Activated CD4-positive, alpha-beta memory T cell treated with anti-CD3 and anti-CD28 coated beads, Interleukin-2, amount 10 ng/mL, durations not matched to agents 7 days and 5 days (primary cell): ENCODE measurements at regions of chr1 and their contacts with region 1.

Region 1: GRCh38 chr1:151024540-151025146 is 11.7 kb upstream of the BNIPL start:
- DNase-seq: peak; percentile 87
- H3K4me3 Mint-ChIP-seq: peak overlapping the region; percentile 18
- H3K27ac Mint-ChIP-seq: peak overlapping the region; percentile 62
- H3K4me1 Mint-ChIP-seq: peaks cover 6% of the 10 kb centered on the region
- H3K27me3 Mint-ChIP-seq: no peaks in the 10 kb centered on the region

Region 2: GRCh38 chr1:150484861-150485260 is 539.8 kb before region 1 on chr1:
- CTCF ChIA-PET with region 1: no interaction called
- POLR2A ChIA-PET with region 1: no interaction called
- DNase-seq: no peak
- H3K4me3 Mint-ChIP-seq: no peak overlapping the region
- H3K27ac Mint-ChIP-seq: no peak overlapping the region
- H3K4me1 Mint-ChIP-seq: peaks cover 23% of the 10 kb centered on the region
- H3K27me3 Mint-ChIP-seq: peaks cover 1% of the 10 kb centered on the region

Region 3: GRCh38 chr1:151047925-151048645 is 23.4 kb after region 1 on chr1:
- CTCF ChIA-PET with region 1: interaction called, 22 read pairs
- POLR2A ChIA-PET with region 1: interaction called, 4 read pairs
- DNase-seq: peak; percentile 65
- H3K4me3 Mint-ChIP-seq: peak overlapping the region; percentile 82
- H3K27ac Mint-ChIP-seq: peak overlapping the region; percentile 79
- H3K4me1 Mint-ChIP-seq: peaks cover 57% of the 10 kb centered on the region
- H3K27me3 Mint-ChIP-seq: no peaks in the 10 kb centered on the region

Region 4: GRCh38 chr1:151059078-151059907 is 34.6 kb after region 1 on chr1 and contains the start of gene CDC42SE1:
- CTCF ChIA-PET with region 1: interaction called, 11 read pairs
- POLR2A ChIA-PET with region 1: interaction called, 15 read pairs
- DNase-seq: peak; percentile 87
- H3K4me3 Mint-ChIP-seq: peak within 1 kb of the TSS; percentile 97
- H3K27ac Mint-ChIP-seq: peak within 1 kb of the TSS; percentile 97
- H3K4me1 Mint-ChIP-seq: peaks cover 51% of the 10 kb centered on the region
- H3K27me3 Mint-ChIP-seq: no peaks in the 10 kb centered on the region
- total RNA-seq, gene CDC42SE1: 345 to 347 TPM

Region 5: GRCh38 chr1:151070474-151071276 is 46.0 kb after region 1 on chr1 and contains the start of gene GABPB2:
- CTCF ChIA-PET with region 1: interaction called, 13 read pairs
- POLR2A ChIA-PET with region 1: interaction called, 3 read pairs
- DNase-seq: peak; percentile 88
- H3K4me3 Mint-ChIP-seq: peak within 1 kb of the TSS; percentile 98
- H3K27ac Mint-ChIP-seq: peak within 1 kb of the TSS; percentile 99
- H3K4me1 Mint-ChIP-seq: peaks cover 31% of the 10 kb centered on the region
- H3K27me3 Mint-ChIP-seq: no peaks in the 10 kb centered on the region
- total RNA-seq, gene GABPB2: 24.5 to 25.9 TPM

Region 6: GRCh38 chr1:151221616-151222015 is 197.0 kb after region 1 on chr1:
- CTCF ChIA-PET with region 1: no interaction called
- POLR2A ChIA-PET with region 1: no interaction called
- DNase-seq: no peak
- H3K4me3 Mint-ChIP-seq: no peak overlapping the region
- H3K27ac Mint-ChIP-seq: no peak overlapping the region
- H3K4me1 Mint-ChIP-seq: peaks cover 7% of the 10 kb centered on the region
- H3K27me3 Mint-ChIP-seq: no peaks in the 10 kb centered on the region

Region 7: GRCh38 chr1:151254217-151255213 is 229.9 kb after region 1 on chr1 and contains the start of gene PSMD4:
- CTCF ChIA-PET with region 1: interaction called, 11 read pairs
- POLR2A ChIA-PET with region 1: no interaction called
- DNase-seq: peak; percentile 95
- H3K4me3 Mint-ChIP-seq: peak within 1 kb of the TSS; percentile 87
- H3K27ac Mint-ChIP-seq: peak within 1 kb of the TSS; percentile 83
- H3K4me1 Mint-ChIP-seq: peaks cover 29% of the 10 kb centered on the region
- H3K27me3 Mint-ChIP-seq: no peaks in the 10 kb centered on the region
- total RNA-seq, gene PSMD4: 178 to 188 TPM